PC-9 (cell line): ENCODE measurements at regions of chr5 and their contacts with region 1.

Region 1: GRCh38 chr5:150560401-150561193 is 52.7 kb downstream of the NDST1 start:
- DNase-seq: peak; percentile 62 to 82
- H3K4me3 ChIP-seq: no peak overlapping the region
- H3K27ac ChIP-seq: no peak overlapping the region
- H3K4me1 ChIP-seq: 0 out of 2 replicates have a peak, but pooled peaks cover 7% of the 10 kb centered on the region
- H3K27me3 ChIP-seq: no peaks in the 10 kb centered on the region
- CTCF ChIP-seq: peak; percentile 90

Region 2: DNA sequence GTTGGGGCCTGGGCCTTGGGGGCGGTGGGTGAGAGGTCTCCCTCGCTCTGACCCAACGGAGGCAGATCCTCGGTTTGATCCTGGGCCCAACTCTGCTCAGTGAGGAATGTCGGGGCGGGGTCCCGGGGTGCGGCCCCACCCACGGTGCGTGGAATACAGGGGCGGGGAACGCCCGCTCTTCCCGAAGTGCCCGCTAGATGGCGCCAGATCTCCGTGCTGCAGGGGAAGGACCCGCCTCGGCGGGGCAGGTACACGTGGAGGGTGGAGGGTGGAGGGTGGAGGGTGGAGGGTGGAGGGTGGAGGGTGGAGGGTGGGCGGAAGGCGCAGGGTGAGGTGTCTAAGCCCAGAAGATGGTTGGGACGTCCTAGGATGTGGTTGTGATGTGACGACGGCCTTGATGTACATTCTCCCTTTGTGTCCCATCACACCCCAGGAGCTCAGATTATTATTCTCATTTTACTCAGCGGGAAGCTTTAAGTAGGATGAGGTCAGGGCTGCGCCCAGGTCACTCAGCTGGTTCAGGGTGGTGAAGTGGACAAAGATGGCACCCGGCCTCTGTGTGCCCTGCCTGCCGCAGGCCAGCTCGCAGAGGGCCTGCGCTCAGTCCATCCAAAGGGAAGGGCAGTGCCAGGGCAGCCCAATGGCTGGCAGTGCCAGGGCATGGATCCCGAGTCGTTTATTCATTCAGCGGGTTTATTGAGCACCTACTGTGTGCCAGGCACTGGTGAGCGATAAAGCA is 101.6 kb before region 1 on chr5:
- CTCF ChIA-PET with region 1: interaction called, 3 read pairs
- POLR2A ChIA-PET with region 1: no interaction called
- intact Hi-C with region 1: loop called (anchors 1 kb)
- DNase-seq: peak in 1 of 2 experiments; percentile 90
- H3K4me3 ChIP-seq: no peak overlapping the region
- H3K27ac ChIP-seq: no peak overlapping the region
- H3K4me1 ChIP-seq: 0 out of 2 replicates have a peak, but pooled peaks cover 10% of the 10 kb centered on the region
- H3K27me3 ChIP-seq: no peaks in the 10 kb centered on the region
- CTCF ChIP-seq: peak; percentile 80

Region 3: GRCh38 chr5:150700594-150701293 is 140.1 kb after region 1 on chr5 and contains the start of gene RBM22:
- CTCF ChIA-PET with region 1: interaction called, 11 read pairs
- POLR2A ChIA-PET with region 1: no interaction called
- intact Hi-C with region 1: loop called (anchors 2 kb)
- DNase-seq: peak; percentile 74 to 89
- H3K4me3 ChIP-seq: peak within 1 kb of the TSS; percentile 86
- H3K27ac ChIP-seq: peak within 1 kb of the TSS; percentile 59
- H3K4me1 ChIP-seq: peaks cover 20% of the 10 kb centered on the region; the same call in 1 of the 2 replicates
- H3K27me3 ChIP-seq: no peaks in the 10 kb centered on the region
- CTCF ChIP-seq: peak; percentile 65
- total RNA-seq, gene RBM22: 49.7 and 57.3 TPM in 2 replicates

Region 4: DNA sequence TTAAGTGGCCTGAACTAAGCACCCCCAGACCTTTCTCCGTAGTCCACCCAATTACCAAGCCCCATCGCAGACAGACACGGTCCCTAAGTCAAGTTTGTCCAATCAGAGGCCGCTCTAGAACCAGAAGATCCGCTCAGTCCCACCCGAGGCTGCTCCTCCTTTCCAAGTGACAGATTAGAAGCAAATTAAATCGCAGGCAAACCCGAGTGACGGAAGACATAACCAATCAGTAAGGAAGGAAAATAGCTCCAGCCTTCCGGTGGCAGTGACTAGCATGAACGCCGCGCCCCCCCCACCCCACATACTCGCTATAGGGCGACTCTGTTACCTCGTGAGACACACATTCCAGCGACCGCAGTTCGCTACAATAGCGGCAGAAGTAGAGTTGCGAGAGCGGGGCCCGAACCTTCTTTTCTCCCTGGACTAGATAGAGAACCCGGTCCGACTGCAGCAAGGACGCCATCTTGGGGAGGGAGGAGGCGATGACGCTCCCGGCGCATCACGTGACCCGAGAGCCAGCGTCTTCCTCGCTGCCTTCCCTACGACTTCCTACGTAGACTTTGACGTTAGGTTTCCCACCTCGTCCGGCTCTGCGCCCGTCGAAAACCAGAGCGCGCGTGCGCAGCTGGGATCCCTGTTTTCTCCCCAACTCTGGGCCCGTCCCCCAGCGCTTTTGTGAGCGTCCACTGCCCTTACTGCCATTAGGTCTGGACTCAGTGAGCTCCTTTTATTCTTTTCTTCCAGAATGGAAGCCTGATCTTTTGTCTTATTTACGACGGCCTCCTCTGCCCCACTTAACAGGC is 198.1 kb after region 1 on chr5 and contains the start of gene DCTN4:
- CTCF ChIA-PET with region 1: no interaction called
- POLR2A ChIA-PET with region 1: no interaction called
- intact Hi-C with region 1: no loop called
- DNase-seq: peak; percentile 94 to 97
- H3K4me3 ChIP-seq: peak within 1 kb of the TSS; percentile 79
- H3K27ac ChIP-seq: peak within 1 kb of the TSS; percentile 73
- H3K4me1 ChIP-seq: peaks cover 24% of the 10 kb centered on the region
- H3K27me3 ChIP-seq: no peaks in the 10 kb centered on the region
- CTCF ChIP-seq: peak; percentile 55; the same call in 1 of the 2 replicates
- total RNA-seq, gene DCTN4: 49.1 and 54.1 TPM in 2 replicates

Region 5: GRCh38 chr5:150778517-150779396 is 218.2 kb after region 1 on chr5 and contains the start of gene SMIM3:
- CTCF ChIA-PET with region 1: interaction called, 8 read pairs
- POLR2A ChIA-PET with region 1: no interaction called
- intact Hi-C with region 1: loop called (anchors 5 kb)
- DNase-seq: peak; percentile 55 to 83
- H3K4me3 ChIP-seq: peak within 1 kb of the TSS; percentile 73
- H3K27ac ChIP-seq: no peak within 1 kb of the TSS
- H3K4me1 ChIP-seq: peaks cover 36% of the 10 kb centered on the region
- H3K27me3 ChIP-seq: no peaks in the 10 kb centered on the region
- CTCF ChIP-seq: peak; percentile 35; the same call in 1 of the 2 replicates
- total RNA-seq, gene SMIM3: 11.5 and 12.1 TPM in 2 replicates

Region 6: GRCh38 chr5:151020304-151021110 is 459.9 kb after region 1 on chr5 and contains the start of gene GPX3:
- CTCF ChIA-PET with region 1: no interaction called
- POLR2A ChIA-PET with region 1: no interaction called
- intact Hi-C with region 1: loop called (anchors 10 kb)
- DNase-seq: peak; percentile 78 to 93
- H3K4me3 ChIP-seq: peak within 1 kb of the TSS; percentile 94
- H3K27ac ChIP-seq: no peak within 1 kb of the TSS
- H3K4me1 ChIP-seq: peaks cover 12% of the 10 kb centered on the region
- H3K27me3 ChIP-seq: no peaks in the 10 kb centered on the region
- CTCF ChIP-seq: no peak
- total RNA-seq, gene GPX3: 84.6 and 93.2 TPM in 2 replicates